CD4-positive, alpha-beta T cell (primary cell): ENCODE measurements at regions of chr2 and their contacts with region 1.

Region 1: GRCh38 chr2:130355578-130356431 is at the start of gene PTPN18:
- DNase-seq: peak in 12 of 14 experiments; percentile 23 to 80 (median 48)
- ATAC-seq: peak; percentile 84
- H3K4me3 ChIP-seq: peak within 1 kb of the TSS; percentile 60
- H3K4me3 Mint-ChIP-seq: peak within 1 kb of the TSS; percentile 89
- H3K27ac ChIP-seq: no peak within 1 kb of the TSS
- H3K27ac Mint-ChIP-seq: no peak within 1 kb of the TSS
- H3K4me1 ChIP-seq: peaks cover 16% of the 10 kb centered on the region
- H3K4me1 Mint-ChIP-seq: peaks cover 17% of the 10 kb centered on the region
- H3K27me3 ChIP-seq: no peaks in the 10 kb centered on the region
- H3K27me3 Mint-ChIP-seq: no peaks in the 10 kb centered on the region
- CTCF ChIP-seq: peak; percentile 42
- total RNA-seq, gene PTPN18: 27.6 to 27.8 TPM

Region 2: GRCh38 chr2:130372055-130372832 is 16.4 kb after region 1 on chr2:
- CTCF ChIA-PET with region 1: interaction called, 4 read pairs
- POLR2A ChIA-PET with region 1: interaction called, 5 read pairs
- intact Hi-C with region 1: loop called in 1 of 2 experiments (anchors 2 kb)
- DNase-seq: peak; percentile 57 to 85 (median 72)
- ATAC-seq: peak; percentile 83
- H3K4me3 ChIP-seq: peak overlapping the region; percentile 76
- H3K4me3 Mint-ChIP-seq: peak overlapping the region; percentile 92
- H3K27ac ChIP-seq: peak overlapping the region; percentile 70 to 80
- H3K27ac Mint-ChIP-seq: peak overlapping the region; percentile 97
- H3K4me1 ChIP-seq: peaks cover 71% of the 10 kb centered on the region
- H3K4me1 Mint-ChIP-seq: peaks cover 73% of the 10 kb centered on the region
- H3K27me3 ChIP-seq: no peaks in the 10 kb centered on the region
- H3K27me3 Mint-ChIP-seq: no peaks in the 10 kb centered on the region
- CTCF ChIP-seq: peak; percentile 67

Region 3: GRCh38 chr2:130873700-130874346 is 518.0 kb after region 1 on chr2:
- CTCF ChIA-PET with region 1: no interaction called
- POLR2A ChIA-PET with region 1: no interaction called
- intact Hi-C with region 1: loop called in 1 of 2 experiments (anchors 10 kb)
- DNase-seq: peak; percentile 47 to 78 (median 62)
- ATAC-seq: peak; percentile 67
- H3K4me3 ChIP-seq: no peak overlapping the region
- H3K4me3 Mint-ChIP-seq: no peak overlapping the region
- H3K27ac ChIP-seq: no peak overlapping the region
- H3K27ac Mint-ChIP-seq: no peak overlapping the region
- H3K4me1 ChIP-seq: no peaks in the 10 kb centered on the region
- H3K4me1 Mint-ChIP-seq: no peaks in the 10 kb centered on the region
- H3K27me3 ChIP-seq: peaks cover 0 to 5% of the 10 kb centered on the region in 2 experiments
- H3K27me3 Mint-ChIP-seq: peaks cover 5% of the 10 kb centered on the region
- CTCF ChIP-seq: peak; percentile 61